Naive thymus-derived CD4-positive, alpha-beta T cell (primary cell): ENCODE measurements at regions of chr17 and their contacts with region 1.

Region 1: DNA sequence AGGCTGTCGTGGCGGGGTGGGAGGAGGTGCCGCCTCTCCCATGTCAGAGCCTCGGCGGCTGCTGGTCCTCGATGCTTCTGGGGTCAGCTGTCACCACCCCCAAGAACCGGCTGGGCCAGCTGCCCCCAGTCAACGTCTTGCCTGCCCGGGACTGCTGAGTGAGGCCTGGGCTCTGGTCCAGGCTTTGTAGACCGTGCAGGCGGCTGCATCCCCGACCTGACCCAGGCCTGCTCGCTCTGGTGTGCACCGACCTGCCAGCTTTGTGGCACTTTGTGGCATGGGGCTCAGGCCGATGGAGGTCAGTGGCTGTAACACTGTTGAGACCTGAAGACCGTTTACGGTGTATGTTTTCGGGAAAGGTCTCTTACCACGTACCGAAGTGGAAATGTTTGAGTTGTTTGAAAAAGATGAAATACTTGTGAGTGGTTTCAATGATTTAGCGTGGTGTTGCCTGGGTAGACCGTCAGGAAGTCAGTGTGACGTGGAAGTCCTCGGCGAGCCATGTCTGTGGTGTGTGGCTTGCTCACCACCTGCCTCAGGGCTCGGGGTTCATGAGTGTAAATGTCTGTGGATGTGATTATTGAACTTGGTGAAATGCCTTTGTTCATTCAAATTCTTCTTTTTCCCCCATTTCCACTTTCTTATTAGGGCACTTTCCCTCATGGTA is 53.2 kb upstream of the ZNF750 start:
- DNase-seq: peak in 8 of 9 donors; percentile 42 to 91 (median 74)
- ATAC-seq: peak; percentile 98
- H3K4me3 ChIP-seq: no peak overlapping the region
- H3K4me3 Mint-ChIP-seq: peak overlapping the region in 9 of 10 donors; percentile 43 to 82 (median 77)
- H3K27ac ChIP-seq: peak overlapping the region; percentile 67
- H3K27ac Mint-ChIP-seq: peak overlapping the region; percentile 78 to 97 (median 93)
- H3K4me1 ChIP-seq: peaks cover 17 to 23% of the 10 kb centered on the region in 2 donors
- H3K4me1 Mint-ChIP-seq: peaks cover 12 to 41% (median 33%) of the 10 kb centered on the region in 7 donors
- H3K27me3 ChIP-seq: no peaks in the 10 kb centered on the region
- H3K27me3 Mint-ChIP-seq: no peaks in the 10 kb centered on the region

Region 2: GRCh38 chr17:82839617-82840280 is 53.3 kb before region 1 on chr17 and contains the start of gene ZNF750:
- CTCF ChIA-PET with region 1: no interaction called
- POLR2A ChIA-PET with region 1: no interaction called
- intact Hi-C with region 1: no loop called
- DNase-seq: no peak
- ATAC-seq: no peak
- H3K4me3 ChIP-seq: no peak within 1 kb of the TSS
- H3K4me3 Mint-ChIP-seq: no peak within 1 kb of the TSS
- H3K27ac ChIP-seq: no peak within 1 kb of the TSS
- H3K27ac Mint-ChIP-seq: peak within 1 kb of the TSS in 1 of 9 donors; percentile 72
- H3K4me1 ChIP-seq: no peaks in the 10 kb centered on the region
- H3K4me1 Mint-ChIP-seq: peaks cover 0 to 10% (median 4%) of the 10 kb centered on the region in 7 donors
- H3K27me3 ChIP-seq: no peaks in the 10 kb centered on the region
- H3K27me3 Mint-ChIP-seq: no peaks in the 10 kb centered on the region
- total RNA-seq, gene ZNF750: not detected

Region 3: DNA sequence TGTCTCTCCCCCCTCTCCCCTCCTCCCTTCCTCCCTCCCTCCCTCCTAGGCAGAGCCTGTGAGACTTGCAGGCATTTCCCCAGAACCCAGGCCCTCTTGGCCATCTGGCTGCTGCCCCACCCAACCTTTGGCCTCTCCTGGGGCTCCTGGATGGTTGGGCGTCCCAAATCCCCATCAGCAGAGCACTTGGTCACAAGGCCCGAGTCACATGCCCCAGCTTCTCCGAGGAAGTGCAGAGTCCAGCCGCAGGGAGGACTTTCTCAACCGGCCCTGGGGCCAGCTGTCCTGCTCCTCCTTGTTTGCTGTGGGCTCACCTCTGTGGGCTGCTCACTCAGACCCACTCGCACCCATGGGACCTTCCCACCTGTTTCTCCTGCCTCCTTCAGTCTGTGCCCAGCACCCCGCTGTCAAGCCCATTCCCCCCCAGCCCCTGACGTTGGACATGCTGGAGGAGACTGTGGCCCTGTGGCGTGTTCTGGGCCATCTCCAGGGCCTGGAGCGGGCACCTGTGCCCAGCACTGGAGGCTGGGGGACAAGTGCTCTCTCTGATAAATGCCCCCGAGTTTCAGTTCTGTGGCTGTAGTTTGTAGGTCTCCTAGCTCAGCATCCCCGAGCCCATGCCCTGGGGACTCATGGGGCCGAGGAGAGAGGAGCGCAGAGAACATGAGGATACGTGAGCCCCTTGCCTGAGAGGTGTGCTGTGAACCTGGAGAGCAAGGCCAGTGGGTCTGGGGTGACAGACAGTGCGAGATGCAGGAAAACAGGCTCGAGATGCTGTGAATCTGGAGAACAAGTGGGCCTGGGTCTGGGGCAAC is 10.9 kb before region 1 on chr17:
- CTCF ChIA-PET with region 1: interaction called, 9 read pairs
- POLR2A ChIA-PET with region 1: interaction called, 30 read pairs
- intact Hi-C with region 1: loop called (anchors 1 kb)
- DNase-seq: no peak
- ATAC-seq: no peak
- H3K4me3 ChIP-seq: peak overlapping the region; percentile 47
- H3K4me3 Mint-ChIP-seq: peak overlapping the region; percentile 81 to 99 (median 90)
- H3K27ac ChIP-seq: peak overlapping the region; percentile 75
- H3K27ac Mint-ChIP-seq: peak overlapping the region; percentile 90 to 100 (median 99)
- H3K4me1 ChIP-seq: peaks cover 51% of the 10 kb centered on the region in 2 donors
- H3K4me1 Mint-ChIP-seq: peaks cover 51 to 90% (median 78%) of the 10 kb centered on the region in 7 donors
- H3K27me3 ChIP-seq: no peaks in the 10 kb centered on the region
- H3K27me3 Mint-ChIP-seq: no peaks in the 10 kb centered on the region

Region 4: DNA sequence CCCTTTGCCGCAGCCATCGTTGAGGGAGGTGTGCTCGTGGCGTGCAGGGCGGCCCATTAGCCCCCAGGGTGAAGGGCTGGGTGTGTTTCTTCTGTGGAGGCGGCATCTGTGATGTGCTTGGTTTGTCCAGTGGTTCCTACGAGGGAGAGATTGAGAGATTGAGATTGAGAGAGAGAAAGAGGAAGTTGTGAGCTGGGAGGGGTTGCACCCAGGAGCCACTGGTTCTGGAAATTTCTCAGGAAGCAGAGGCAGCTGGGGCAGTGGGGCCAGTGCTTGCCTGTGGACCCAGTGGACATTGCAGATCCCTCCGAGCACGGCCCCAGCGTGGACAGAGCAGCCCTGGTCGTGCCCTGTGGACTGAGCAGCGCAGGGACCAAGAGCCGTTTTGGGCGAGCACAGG is 18.8 kb after region 1 on chr17:
- CTCF ChIA-PET with region 1: interaction called, 3 read pairs
- POLR2A ChIA-PET with region 1: interaction called, 6 read pairs
- intact Hi-C with region 1: loop called in 1 of 2 experiments (anchors 1 kb)
- DNase-seq: no peak
- ATAC-seq: peak; percentile 35
- H3K4me3 ChIP-seq: no peak overlapping the region
- H3K4me3 Mint-ChIP-seq: peak overlapping the region in 1 of 10 donors; percentile 38
- H3K27ac ChIP-seq: no peak overlapping the region
- H3K27ac Mint-ChIP-seq: peak overlapping the region in 7 of 9 donors; percentile 6 to 89 (median 63)
- H3K4me1 ChIP-seq: no peaks in the 10 kb centered on the region
- H3K4me1 Mint-ChIP-seq: peaks cover 4 to 30% (median 23%) of the 10 kb centered on the region in 7 donors
- H3K27me3 ChIP-seq: no peaks in the 10 kb centered on the region
- H3K27me3 Mint-ChIP-seq: no peaks in the 10 kb centered on the region

Region 5: DNA sequence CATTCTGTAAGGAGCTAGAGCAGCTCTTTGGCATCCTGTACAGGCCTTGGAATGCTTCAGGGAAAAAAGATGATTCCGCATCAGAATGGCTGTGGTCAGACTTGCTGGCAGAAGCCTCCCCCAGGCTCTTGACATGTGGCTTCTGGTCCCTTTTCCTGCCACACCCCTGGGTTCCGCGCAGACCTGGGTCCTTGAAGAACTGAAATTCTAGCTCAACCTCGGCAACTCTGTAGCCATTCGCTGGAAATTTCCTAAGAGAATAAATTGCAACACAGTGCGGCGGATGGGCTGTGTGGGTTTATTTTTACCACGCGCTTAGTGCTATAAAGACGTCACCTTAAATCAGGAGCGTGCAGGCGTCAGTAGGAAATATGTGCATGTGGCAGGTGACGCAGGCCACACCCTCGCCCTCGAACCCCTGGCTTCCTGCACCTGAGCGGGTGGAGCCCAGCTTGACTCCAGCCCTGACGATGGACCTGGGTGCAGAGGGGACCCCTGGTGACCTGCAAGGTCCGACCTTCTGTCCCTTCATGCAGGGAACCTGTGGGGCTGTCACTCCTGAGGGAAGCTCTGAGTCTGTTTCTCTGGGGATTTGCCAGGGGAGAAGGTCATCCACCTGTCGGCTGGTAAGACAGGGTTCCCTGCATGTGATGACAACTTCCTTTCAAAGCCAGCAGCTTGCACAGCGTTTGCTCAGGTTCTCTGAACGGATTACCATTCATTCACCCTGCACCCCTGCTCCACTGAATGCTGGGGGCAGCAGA is 232.7 kb after region 1 on chr17:
- CTCF ChIA-PET with region 1: no interaction called
- POLR2A ChIA-PET with region 1: no interaction called
- intact Hi-C with region 1: no loop called
- DNase-seq: peak in 7 of 9 donors; percentile 26 to 58 (median 39)
- ATAC-seq: peak; percentile 79
- H3K4me3 ChIP-seq: peak overlapping the region; percentile 23
- H3K4me3 Mint-ChIP-seq: peak overlapping the region in 7 of 10 donors; percentile 25 to 61 (median 47)
- H3K27ac ChIP-seq: peak overlapping the region; percentile 11
- H3K27ac Mint-ChIP-seq: peak overlapping the region in 5 of 9 donors; percentile 48 to 81 (median 63)
- H3K4me1 ChIP-seq: peaks cover 10 to 15% of the 10 kb centered on the region in 2 donors
- H3K4me1 Mint-ChIP-seq: peaks cover 9 to 18% (median 12%) of the 10 kb centered on the region in 7 donors
- H3K27me3 ChIP-seq: peaks cover 0 to 4% of the 10 kb centered on the region in 2 donors
- H3K27me3 Mint-ChIP-seq: peaks cover 20 to 45% (median 27%) of the 10 kb centered on the region in 5 donors